Activated B cell treated with CpG ODN at 0.5 μM for 24 hours (primary cell): ENCODE measurements at regions of chr2 and their contacts with region 1.

Region 1: DNA sequence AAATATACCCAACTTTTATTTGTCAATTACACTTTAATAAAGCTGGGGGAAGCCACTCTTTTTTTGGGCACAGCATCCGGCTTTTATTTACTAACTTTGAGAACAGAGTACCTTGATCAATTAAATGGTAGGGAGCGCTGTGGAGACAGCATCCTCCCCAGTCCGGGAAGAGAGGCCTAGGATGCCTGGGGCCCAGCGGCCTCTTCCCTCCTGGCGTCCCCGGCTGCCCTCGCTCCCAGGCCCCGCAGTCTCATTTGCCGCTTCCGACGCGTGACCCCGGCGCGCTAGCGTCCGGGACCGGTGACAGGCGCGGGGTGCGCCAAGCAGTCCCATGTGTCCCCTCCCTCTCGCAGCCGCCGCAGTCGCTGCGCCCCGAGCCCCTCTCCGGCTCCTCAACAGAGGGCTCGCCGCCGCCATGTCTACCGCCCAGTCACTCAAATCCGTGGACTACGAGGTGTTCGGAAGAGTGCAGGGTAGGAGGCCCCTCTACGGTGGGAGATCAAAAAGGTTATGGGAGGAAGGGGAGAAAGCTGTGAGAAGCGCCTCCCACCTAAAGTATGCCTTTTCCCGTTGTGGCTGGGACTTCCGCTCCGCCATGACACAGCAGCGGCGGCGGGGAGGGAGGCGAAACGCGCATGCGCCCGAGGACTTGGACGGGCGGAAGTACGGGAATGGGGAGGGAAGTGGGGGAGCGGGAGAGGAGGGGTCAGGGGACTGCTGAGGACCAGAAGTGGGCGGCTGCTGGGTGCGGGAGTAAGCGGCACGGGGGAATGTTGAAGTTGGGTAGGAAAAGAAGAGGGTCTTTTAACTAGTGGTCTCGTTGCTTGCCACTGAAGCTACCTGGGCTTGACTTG is at the start of gene ACYP2:
- DNase-seq: peak; percentile 89
- ATAC-seq: peak; percentile 84
- H3K4me3 Mint-ChIP-seq: peak within 1 kb of the TSS; percentile 97
- H3K27ac Mint-ChIP-seq: peak within 1 kb of the TSS; percentile 100
- H3K4me1 Mint-ChIP-seq: peaks cover 26% of the 10 kb centered on the region
- H3K27me3 Mint-ChIP-seq: no peaks in the 10 kb centered on the region
- CTCF ChIP-seq: no peak
- total RNA-seq, gene ACYP2: 14.9 and 15.9 TPM in 2 replicates

Region 2: DNA sequence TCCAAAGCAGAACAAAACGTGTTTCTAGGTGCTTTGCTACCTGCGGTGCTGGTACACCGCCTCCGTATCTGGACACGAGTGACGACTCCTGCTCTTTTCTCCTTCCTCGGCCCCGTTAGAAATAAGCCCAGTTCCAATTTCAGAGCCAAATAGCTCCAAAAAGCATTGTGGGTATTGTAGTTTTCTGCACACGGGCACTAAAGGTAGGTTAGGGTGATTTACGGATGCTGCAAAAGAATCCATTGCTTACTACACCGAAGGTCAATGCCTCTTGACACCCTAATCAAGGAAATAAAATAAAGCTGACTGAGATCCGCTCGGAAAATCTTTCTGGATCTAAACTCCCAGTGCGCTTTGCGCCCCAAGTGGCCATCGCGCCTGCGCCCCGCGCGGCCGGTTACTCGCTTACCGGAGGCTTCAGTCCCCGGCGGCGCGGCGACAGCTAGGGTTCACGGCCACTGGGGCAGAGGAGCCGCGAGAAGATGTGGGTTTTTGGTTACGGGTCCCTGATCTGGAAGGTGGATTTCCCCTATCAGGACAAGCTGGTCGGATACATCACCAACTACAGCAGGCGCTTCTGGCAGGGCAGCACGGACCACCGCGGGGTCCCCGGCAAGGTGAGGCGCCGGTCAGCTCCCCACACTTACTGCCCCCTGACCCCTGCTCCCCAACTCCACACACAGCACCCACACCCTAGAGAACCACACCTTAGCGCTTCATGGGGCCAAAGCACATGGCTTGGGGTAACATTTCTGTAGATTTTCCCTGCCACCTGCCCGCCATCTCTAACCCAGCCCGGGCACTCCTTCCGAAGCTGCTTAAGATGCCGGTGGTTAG is 347.9 kb before region 1 on chr2 and contains the start of gene CHAC2:
- CTCF ChIA-PET with region 1: no interaction called
- POLR2A ChIA-PET with region 1: interaction called, 12 read pairs
- intact Hi-C with region 1: loop called (anchors 1 kb)
- DNase-seq: peak; percentile 82
- ATAC-seq: peak; percentile 92
- H3K4me3 Mint-ChIP-seq: peak within 1 kb of the TSS; percentile 95
- H3K27ac Mint-ChIP-seq: peak within 1 kb of the TSS; percentile 99
- H3K4me1 Mint-ChIP-seq: peaks cover 21% of the 10 kb centered on the region
- H3K27me3 Mint-ChIP-seq: no peaks in the 10 kb centered on the region
- CTCF ChIP-seq: no peak
- total RNA-seq, gene CHAC2: 7.0 and 7.6 TPM in 2 replicates

Region 3: GRCh38 chr2:54099829-54100585 is 15.5 kb before region 1 on chr2:
- CTCF ChIA-PET with region 1: interaction called, 4 read pairs
- POLR2A ChIA-PET with region 1: interaction called, 24 read pairs
- intact Hi-C with region 1: loop called (anchors 1 kb)
- DNase-seq: peak; percentile 45
- ATAC-seq: peak; percentile 75
- H3K4me3 Mint-ChIP-seq: peak overlapping the region; percentile 52
- H3K27ac Mint-ChIP-seq: peak overlapping the region; percentile 91
- H3K4me1 Mint-ChIP-seq: peaks cover 81% of the 10 kb centered on the region
- H3K27me3 Mint-ChIP-seq: no peaks in the 10 kb centered on the region
- CTCF ChIP-seq: no peak

Region 4: DNA sequence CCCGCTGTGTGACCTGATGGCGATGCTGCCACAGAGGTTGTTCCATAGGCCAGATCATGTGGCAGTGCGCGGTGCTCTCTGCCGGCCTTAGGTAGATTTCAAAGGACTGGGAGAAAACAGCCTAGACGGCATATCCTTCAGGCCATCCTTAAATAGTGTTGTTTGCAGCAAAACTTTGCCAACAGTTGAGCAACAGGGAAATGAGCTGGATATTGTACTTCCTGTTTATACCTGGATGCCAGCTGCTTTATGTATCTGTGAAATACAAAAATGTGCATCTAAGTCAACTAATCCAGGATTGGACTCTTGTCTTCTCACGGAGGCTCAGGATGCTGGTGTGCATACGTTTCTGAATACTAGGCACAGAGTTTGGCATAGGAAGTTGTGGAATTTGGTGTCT is 715.0 kb after region 1 on chr2:
- CTCF ChIA-PET with region 1: no interaction called
- POLR2A ChIA-PET with region 1: no interaction called
- intact Hi-C with region 1: no loop called
- DNase-seq: no peak
- ATAC-seq: no peak
- H3K4me3 Mint-ChIP-seq: no peak overlapping the region
- H3K27ac Mint-ChIP-seq: no peak overlapping the region
- H3K4me1 Mint-ChIP-seq: no peaks in the 10 kb centered on the region
- H3K27me3 Mint-ChIP-seq: no peaks in the 10 kb centered on the region
- CTCF ChIP-seq: no peak

Region 5: GRCh38 chr2:55223958-55224760 is 1108.6 kb after region 1 on chr2:
- CTCF ChIA-PET with region 1: no interaction called
- POLR2A ChIA-PET with region 1: interaction called, 4 read pairs
- intact Hi-C with region 1: loop called (anchors 5 kb)
- DNase-seq: no peak
- ATAC-seq: no peak
- H3K4me3 Mint-ChIP-seq: peak overlapping the region; percentile 81
- H3K27ac Mint-ChIP-seq: peak overlapping the region; percentile 87
- H3K4me1 Mint-ChIP-seq: peaks cover 28% of the 10 kb centered on the region
- H3K27me3 Mint-ChIP-seq: no peaks in the 10 kb centered on the region
- CTCF ChIP-seq: no peak

Region 6: DNA sequence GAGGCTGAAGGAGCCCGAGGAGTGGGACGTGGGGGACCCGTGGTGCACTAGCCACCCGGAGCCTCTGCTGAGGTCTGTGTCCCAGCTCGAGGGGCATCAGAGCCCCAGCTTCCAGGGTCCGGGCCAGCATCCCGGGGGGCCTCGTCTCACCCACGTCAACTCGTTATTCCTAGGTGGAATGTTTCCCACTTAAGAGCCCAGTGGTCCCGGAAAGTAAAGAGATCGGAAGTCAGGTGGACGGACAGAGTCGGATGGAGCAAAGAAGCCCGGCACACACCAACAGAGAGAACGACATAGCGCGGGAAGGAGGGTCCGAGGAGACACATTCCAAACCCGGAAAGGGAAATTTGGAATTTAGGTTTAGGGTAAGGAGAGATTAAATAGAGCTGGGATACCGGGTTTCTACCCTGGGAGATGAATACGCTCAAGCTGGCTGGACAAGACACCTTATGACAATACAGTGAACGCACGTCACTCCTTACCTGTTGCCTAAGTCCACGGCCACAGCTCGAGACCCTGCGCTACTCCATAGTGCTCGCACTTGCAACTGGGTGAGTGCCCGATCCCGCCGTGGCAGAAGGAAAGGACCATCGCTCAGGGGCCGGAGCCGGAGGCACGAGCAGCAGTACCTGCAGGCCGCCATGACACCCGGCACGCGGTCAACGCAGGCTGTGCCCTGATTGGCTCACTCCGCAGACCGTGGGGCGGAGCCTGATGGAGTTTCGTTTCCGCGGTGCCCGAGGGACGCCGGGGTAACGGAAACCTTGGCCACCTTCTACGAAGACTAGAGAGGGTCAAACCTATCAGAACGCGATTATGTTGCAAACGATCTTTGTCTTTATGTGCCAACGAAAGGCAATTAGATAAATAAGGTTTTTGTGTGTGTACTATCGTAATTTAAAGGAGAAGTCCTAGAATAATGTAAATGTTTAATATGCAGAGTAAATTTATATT is 1577.9 kb after region 1 on chr2 and contains the start of gene PNPT1:
- CTCF ChIA-PET with region 1: no interaction called
- POLR2A ChIA-PET with region 1: no interaction called
- intact Hi-C with region 1: loop called (anchors 10 kb)
- DNase-seq: peak; percentile 87
- ATAC-seq: peak; percentile 100
- H3K4me3 Mint-ChIP-seq: peak within 1 kb of the TSS; percentile 96
- H3K27ac Mint-ChIP-seq: peak within 1 kb of the TSS; percentile 79
- H3K4me1 Mint-ChIP-seq: peaks cover 30% of the 10 kb centered on the region
- H3K27me3 Mint-ChIP-seq: no peaks in the 10 kb centered on the region
- CTCF ChIP-seq: no peak
- total RNA-seq, gene PNPT1: 26.6 and 35.8 TPM in 2 replicates